OCI-LY7 (cell line): ENCODE measurements at regions of chr6 and their contacts with region 1.

Region 1: GRCh38 chr6:149934249-149935156 is 7.3 kb upstream of the ULBP2 start:
- DNase-seq: peak; percentile 78
- H3K4me3 ChIP-seq: no peak overlapping the region
- H3K27ac ChIP-seq: no peak overlapping the region
- H3K4me1 ChIP-seq: peaks cover 5% of the 10 kb centered on the region
- CTCF ChIP-seq: peak; percentile 94

Region 2: GRCh38 chr6:149961728-149962425 is 27.4 kb after region 1 on chr6:
- CTCF ChIA-PET with region 1: interaction called, 6 read pairs
- POLR2A ChIA-PET with region 1: no interaction called
- intact Hi-C with region 1: loop called (anchors 1 kb)
- DNase-seq: peak; percentile 59
- H3K4me3 ChIP-seq: no peak overlapping the region
- H3K27ac ChIP-seq: no peak overlapping the region
- H3K4me1 ChIP-seq: peaks cover 9% of the 10 kb centered on the region
- CTCF ChIP-seq: peak; percentile 72

Region 3: GRCh38 chr6:150016324-150017185 is 82.1 kb after region 1 on chr6:
- CTCF ChIA-PET with region 1: no interaction called
- POLR2A ChIA-PET with region 1: no interaction called
- intact Hi-C with region 1: loop called (anchors 1 kb)
- DNase-seq: peak; percentile 76
- H3K4me3 ChIP-seq: no peak overlapping the region
- H3K27ac ChIP-seq: no peak overlapping the region
- H3K4me1 ChIP-seq: no peaks in the 10 kb centered on the region
- CTCF ChIP-seq: peak; percentile 79

Region 4: DNA sequence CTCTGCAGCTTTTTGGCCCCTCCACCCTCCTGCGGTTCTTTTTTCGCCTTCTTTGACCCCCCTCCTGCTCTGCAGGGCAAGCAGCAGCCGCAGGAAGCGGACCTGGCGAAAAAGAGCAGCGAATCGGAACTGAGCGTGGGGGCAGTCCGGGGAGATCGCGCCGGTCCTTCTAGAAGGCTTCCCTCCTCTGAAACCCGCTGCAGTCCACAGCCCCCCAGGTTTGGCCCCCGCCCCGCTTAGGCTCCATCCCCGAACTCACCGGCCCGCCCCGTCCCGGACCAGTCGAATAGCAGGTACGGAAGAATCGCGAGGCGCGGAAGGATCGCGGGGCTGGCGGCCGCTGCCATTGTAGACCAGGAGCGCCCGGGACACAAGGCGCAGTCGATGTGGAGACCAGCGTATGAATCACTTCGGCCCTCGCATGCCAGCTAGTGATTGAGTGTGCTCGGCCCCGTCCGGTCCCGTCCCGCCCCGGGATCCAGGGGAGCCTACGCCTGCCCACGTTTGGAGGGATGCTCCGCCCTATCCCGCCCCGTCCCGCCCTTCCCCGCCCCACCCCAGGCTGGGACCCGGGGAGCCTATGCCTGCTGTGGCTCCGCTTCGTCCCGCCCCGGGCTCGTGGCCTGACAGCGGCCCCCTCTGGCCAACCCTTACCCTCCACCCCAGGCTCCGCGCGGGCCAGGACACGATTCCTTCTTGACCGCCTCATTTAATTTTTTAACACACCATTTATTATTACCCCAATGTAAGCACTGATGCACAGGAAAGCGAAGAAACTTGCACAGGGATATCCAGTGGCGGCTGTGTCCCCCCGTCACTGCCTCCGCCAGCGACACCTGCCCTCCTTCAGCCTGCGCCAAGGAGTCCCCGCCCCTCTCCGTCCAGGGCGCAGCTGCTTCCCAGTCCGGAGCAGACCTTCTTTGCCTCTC is 134.5 kb after region 1 on chr6 and contains the start of gene ULBP3:
- CTCF ChIA-PET with region 1: no interaction called
- POLR2A ChIA-PET with region 1: no interaction called
- intact Hi-C with region 1: loop called (anchors 2 kb)
- DNase-seq: peak; percentile 75
- H3K4me3 ChIP-seq: peak within 1 kb of the TSS; percentile 69
- H3K27ac ChIP-seq: no peak within 1 kb of the TSS
- H3K4me1 ChIP-seq: no peaks in the 10 kb centered on the region
- CTCF ChIP-seq: peak; percentile 67
- total RNA-seq, gene ULBP3: 3.5 and 4.5 TPM in 2 replicates